OCI-LY7 (cell line): ENCODE measurements at regions of chr13 and their contacts with region 1.

Region 1: GRCh38 chr13:19927117-19927748 is 31.3 kb upstream of the ZMYM2 start:
- DNase-seq: peak; percentile 57
- H3K4me3 ChIP-seq: no peak overlapping the region
- H3K27ac ChIP-seq: no peak overlapping the region
- H3K4me1 ChIP-seq: no peaks in the 10 kb centered on the region
- CTCF ChIP-seq: peak; percentile 87

Region 2: GRCh38 chr13:19959831-19960652 is 32.8 kb after region 1 on chr13:
- CTCF ChIA-PET with region 1: no interaction called
- POLR2A ChIA-PET with region 1: no interaction called
- intact Hi-C with region 1: loop called (anchors 1 kb)
- DNase-seq: peak; percentile 94
- H3K4me3 ChIP-seq: peak overlapping the region; percentile 96
- H3K27ac ChIP-seq: peak overlapping the region; percentile 83
- H3K4me1 ChIP-seq: peaks cover 28% of the 10 kb centered on the region
- CTCF ChIP-seq: peak; percentile 86

Region 3: GRCh38 chr13:20106742-20107141 is 179.5 kb after region 1 on chr13:
- CTCF ChIA-PET with region 1: no interaction called
- POLR2A ChIA-PET with region 1: interaction called, 11 read pairs
- intact Hi-C with region 1: no loop called
- DNase-seq: no peak
- H3K4me3 ChIP-seq: no peak overlapping the region
- H3K27ac ChIP-seq: no peak overlapping the region
- H3K4me1 ChIP-seq: no peaks in the 10 kb centered on the region
- CTCF ChIP-seq: no peak

Region 4: DNA sequence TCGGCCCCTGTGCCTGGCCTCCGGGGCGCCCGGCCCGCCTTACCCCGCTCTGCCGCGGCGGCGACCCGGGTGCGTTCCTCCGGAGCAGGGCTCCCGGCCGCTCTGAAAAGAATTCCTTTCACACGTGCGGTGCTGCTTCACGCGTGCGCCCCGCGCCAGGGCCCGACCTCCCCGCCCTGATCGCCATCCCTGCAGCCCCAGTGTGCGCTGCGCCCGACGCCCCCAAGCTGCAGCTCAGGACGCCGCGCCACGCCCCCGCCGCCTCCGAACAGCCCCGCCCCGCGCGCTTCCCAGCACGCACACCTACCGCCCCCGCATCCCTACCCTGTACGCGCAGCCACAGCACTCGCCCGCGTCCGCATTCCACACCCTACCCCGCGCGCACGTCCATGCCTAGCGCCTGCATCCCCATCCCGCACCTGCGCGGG is 233.6 kb after region 1 on chr13 and contains the start of gene GJA3:
- CTCF ChIA-PET with region 1: no interaction called
- POLR2A ChIA-PET with region 1: interaction called, 5 read pairs
- intact Hi-C with region 1: loop called (anchors 1 kb)
- DNase-seq: no peak
- H3K4me3 ChIP-seq: peak within 1 kb of the TSS; percentile 55
- H3K27ac ChIP-seq: no peak within 1 kb of the TSS
- H3K4me1 ChIP-seq: peaks cover 9% of the 10 kb centered on the region
- CTCF ChIP-seq: no peak
- total RNA-seq, gene GJA3: not detected in 2 replicates